ENCODE measurements at regions of chr10 and their contacts with region 1.

Region 1: GRCh38 chr10:70880077-70880534 is 8.3 kb downstream of the PCBD1 start:
- DNase-seq: peak; percentile 66 to 75
- H3K4me3 ChIP-seq: no peak overlapping the region
- H3K27ac ChIP-seq: no peak overlapping the region
- H3K4me1 ChIP-seq: no peaks in the 10 kb centered on the region
- H3K27me3 ChIP-seq: no peaks in the 10 kb centered on the region
- CTCF ChIP-seq: peak; percentile 83 to 94 (median 88)
- POLR2A ChIP-seq: no peak

Region 2: DNA sequence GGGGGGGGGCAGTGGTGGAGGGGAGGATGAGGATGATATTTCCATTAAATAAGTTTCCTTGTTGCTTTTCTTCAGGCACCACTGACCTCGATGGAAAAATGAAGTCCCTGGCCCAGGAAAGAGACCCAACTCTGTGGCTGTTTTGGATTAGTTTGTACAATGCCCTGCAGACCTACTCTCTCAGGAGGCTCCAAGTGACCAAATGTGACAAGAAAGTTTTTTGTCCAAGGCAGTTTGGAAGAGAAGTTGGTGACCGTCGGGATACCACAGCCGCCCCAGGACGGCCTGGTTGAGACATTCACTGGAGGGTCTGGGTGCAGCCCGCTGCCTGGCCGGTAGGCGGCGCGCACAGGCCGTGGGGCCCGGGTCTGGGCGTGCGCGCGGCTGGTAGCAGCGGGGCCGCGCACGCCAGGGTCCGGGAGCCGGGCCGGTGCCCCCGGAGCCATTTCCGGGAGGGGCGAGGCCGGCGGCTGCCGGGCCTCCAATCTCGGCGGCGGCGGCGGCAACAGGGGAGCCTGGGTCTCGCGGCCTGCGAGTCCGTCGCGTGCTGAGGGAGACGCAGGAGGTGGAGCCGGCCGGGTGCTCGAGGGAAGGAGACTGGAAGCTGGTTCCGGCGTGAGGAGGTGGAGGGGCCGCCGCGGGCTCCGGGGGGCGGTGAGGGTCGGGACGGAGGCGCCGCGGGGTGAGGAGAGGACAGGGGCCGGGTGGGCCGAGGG is 64.4 kb before region 1 on chr10 and contains the start of gene SGPL1:
- intact Hi-C with region 1: loop called (anchors 5 kb)
- DNase-seq: peak; percentile 80 to 87
- H3K4me3 ChIP-seq: peak within 1 kb of the TSS; percentile 56 to 87
- H3K27ac ChIP-seq: peak within 1 kb of the TSS; percentile 90 to 97
- H3K4me1 ChIP-seq: peaks cover 0 to 6% of the 10 kb centered on the region in 2 donors
- H3K27me3 ChIP-seq: no peaks in the 10 kb centered on the region
- CTCF ChIP-seq: peak; percentile 90 to 100 (median 100)
- POLR2A ChIP-seq: peak; percentile 44 to 77
- total RNA-seq, gene SGPL1: 13.3 to 59.7 (median 27.3) TPM

Measured in uterus (tissue), 4 donors.